ENCODE measurements at regions of chr9 and their contacts with region 1.

Region 1: GRCh38 chr9:121267689-121268597 is at the start of gene GSN:
- DNase-seq: peak; percentile 47
- ATAC-seq: peak; percentile 90
- H3K4me3 ChIP-seq: peak within 1 kb of the TSS; percentile 69 to 84 (median 82)
- H3K27ac ChIP-seq: no peak within 1 kb of the TSS
- H3K4me1 ChIP-seq: peaks cover 34% of the 10 kb centered on the region
- H3K27me3 ChIP-seq: peaks cover 0 to 18% of the 10 kb centered on the region in 2 experiments; a peak in 3 of 5 replicates
- CTCF ChIP-seq: 0 out of 2 replicates have a peak, but pooled peaks have one; percentile 16
- EP300 ChIP-seq: no peak
- POLR2A ChIP-seq: peak in 1 of 2 experiments; percentile 64; a peak in 2 of 4 replicates
- RAD21 ChIP-seq: no peak
- total RNA-seq, gene GSN: 126 and 307 TPM in 2 replicates

Region 2: GRCh38 chr9:120538339-120538738 is 729.6 kb before region 1 on chr9:
- CTCF ChIA-PET with region 1: no interaction called
- POLR2A ChIA-PET with region 1: no interaction called
- in situ Hi-C with region 1: no loop called
- intact Hi-C with region 1: no loop called
- DNase-seq: peak; percentile 95
- ATAC-seq: peak; percentile 96
- H3K4me3 ChIP-seq: no peak overlapping the region
- H3K27ac ChIP-seq: peak overlapping the region; percentile 37
- H3K4me1 ChIP-seq: peaks cover 30% of the 10 kb centered on the region
- H3K27me3 ChIP-seq: no peaks in the 10 kb centered on the region
- CTCF ChIP-seq: no peak
- EP300 ChIP-seq: no peak
- POLR2A ChIP-seq: no peak
- RAD21 ChIP-seq: no peak

Region 3: DNA sequence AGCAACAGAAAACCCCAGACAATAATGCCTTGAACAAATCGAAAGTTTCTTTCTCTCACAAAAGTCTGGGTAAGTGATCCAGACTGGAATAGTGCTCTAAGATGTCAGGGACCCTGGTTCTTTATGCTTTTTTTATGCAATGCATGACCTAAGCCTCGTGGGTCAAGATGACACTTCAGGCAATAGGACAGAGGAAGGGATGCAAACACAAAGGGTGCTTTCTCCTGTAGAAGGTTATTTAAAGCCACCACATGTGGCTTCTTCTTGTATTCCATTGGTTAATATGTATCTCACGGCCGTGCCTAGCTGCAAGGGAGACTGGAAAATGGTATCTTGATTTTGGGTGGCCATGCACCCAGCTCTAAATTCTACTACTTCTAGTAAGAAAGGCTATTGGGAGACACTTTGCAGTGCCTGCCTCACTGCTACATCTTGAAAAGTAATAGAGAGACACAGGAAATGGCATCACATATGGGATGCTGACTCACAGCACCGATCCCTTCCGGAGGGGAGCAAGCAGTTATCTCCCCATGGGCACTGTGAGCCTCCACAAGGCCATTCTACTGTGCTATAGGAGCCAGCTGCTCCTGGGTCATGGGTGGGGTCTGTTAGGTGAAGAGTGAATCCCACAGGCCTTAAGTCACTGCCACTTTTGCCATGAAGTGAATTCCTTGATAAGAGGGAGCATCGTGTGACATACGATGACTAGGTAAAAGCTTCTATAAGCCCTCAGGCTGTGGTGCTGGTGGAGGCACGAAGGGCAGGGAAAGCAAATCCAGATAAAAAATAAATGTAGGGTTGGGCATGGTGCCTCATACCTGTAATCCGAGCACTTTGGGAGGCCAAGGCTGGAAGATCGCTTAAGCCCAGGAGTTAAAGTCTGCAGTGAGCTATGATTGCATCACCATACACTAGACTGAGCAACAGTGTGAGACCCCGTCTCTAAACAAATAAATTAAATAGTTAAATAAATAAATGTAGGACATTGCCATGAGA is 33.7 kb before region 1 on chr9:
- CTCF ChIA-PET with region 1: no interaction called
- POLR2A ChIA-PET with region 1: no interaction called
- in situ Hi-C with region 1: no loop called
- intact Hi-C with region 1: loop called (anchors 5 kb)
- DNase-seq: no peak
- ATAC-seq: peak; percentile 30; the same call in 2 of the 3 replicates
- H3K4me3 ChIP-seq: no peak overlapping the region
- H3K27ac ChIP-seq: no peak overlapping the region
- H3K4me1 ChIP-seq: peaks cover 24% of the 10 kb centered on the region
- H3K27me3 ChIP-seq: peaks cover 0 to 6% of the 10 kb centered on the region in 2 experiments; a peak in 1 of 5 replicates
- CTCF ChIP-seq: no peak
- EP300 ChIP-seq: no peak
- POLR2A ChIP-seq: no peak
- RAD21 ChIP-seq: no peak

Region 4: GRCh38 chr9:121286973-121287741 is 19.2 kb after region 1 on chr9:
- CTCF ChIA-PET with region 1: no interaction called
- POLR2A ChIA-PET with region 1: interaction called, 25 read pairs
- in situ Hi-C with region 1: no loop called
- intact Hi-C with region 1: no loop called
- DNase-seq: peak; percentile 86
- ATAC-seq: peak; percentile 72
- H3K4me3 ChIP-seq: peak overlapping the region; percentile 32 to 58 (median 33); a peak in 4 of 6 replicates
- H3K27ac ChIP-seq: peak overlapping the region; percentile 89
- H3K4me1 ChIP-seq: peaks cover 88% of the 10 kb centered on the region
- H3K27me3 ChIP-seq: no peaks in the 10 kb centered on the region
- CTCF ChIP-seq: peak; percentile 68
- EP300 ChIP-seq: peak in 1 of 2 experiments; percentile 90; a peak in 2 of 4 replicates
- POLR2A ChIP-seq: no peak
- RAD21 ChIP-seq: 0 out of 2 replicates have a peak, but pooled peaks have one; percentile 38